ENCODE measurements at regions of chr2 and their contacts with region 1.

Region 1: GRCh38 chr2:38535744-38536506 is 66.8 kb downstream of the HNRNPLL start:
- DNase-seq: peak; percentile 91
- ATAC-seq: peak; percentile 98
- H3K4me3 Mint-ChIP-seq: peak overlapping the region; percentile 48
- H3K27ac Mint-ChIP-seq: no peak overlapping the region
- H3K4me1 Mint-ChIP-seq: peaks cover 2% of the 10 kb centered on the region
- H3K27me3 Mint-ChIP-seq: peaks cover 13% of the 10 kb centered on the region

Region 2: DNA sequence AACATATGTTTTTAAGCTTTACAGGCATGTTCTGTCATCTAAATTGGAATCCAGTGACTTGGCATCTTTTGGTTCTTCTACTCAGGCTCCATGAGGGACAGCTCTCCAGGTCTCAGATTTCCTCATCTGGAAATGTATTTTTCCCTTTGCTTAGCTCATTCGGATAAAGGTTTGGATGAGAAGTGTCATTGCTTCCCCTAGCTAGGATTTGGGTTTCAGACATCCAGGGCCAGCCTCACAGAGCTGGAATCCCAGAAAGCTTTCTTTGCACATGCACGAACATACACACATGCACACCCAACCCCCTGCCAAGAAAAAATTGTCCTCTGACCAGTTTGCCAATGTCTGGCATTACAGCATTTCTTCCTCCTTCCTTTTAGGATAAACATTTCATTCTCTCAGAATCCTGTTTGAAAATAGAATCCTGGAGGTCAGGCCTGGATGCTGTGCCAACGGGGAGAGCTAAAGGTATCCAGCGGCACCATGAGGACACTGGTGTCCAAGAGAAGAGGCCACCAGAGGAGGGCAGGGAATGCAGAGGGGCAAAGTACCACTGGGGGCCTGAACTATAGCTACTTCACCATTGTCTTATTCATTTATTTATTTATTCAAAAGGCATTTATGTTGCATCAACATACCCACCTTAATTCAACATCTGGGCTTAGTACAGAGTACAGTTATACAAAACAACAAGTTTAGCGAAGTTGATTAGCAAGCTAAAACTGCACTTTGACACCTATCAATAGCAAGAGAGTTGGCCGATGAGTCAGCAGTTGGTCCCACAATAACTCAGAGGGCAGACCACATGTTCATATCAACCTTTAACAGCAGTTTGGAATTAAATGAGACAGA is 61.0 kb before region 1 on chr2:
- CTCF ChIA-PET with region 1: no interaction called
- POLR2A ChIA-PET with region 1: no interaction called
- intact Hi-C with region 1: no loop called
- DNase-seq: peak; percentile 67
- ATAC-seq: peak; percentile 80
- H3K4me3 Mint-ChIP-seq: no peak overlapping the region
- H3K27ac Mint-ChIP-seq: no peak overlapping the region
- H3K4me1 Mint-ChIP-seq: peaks cover 28% of the 10 kb centered on the region
- H3K27me3 Mint-ChIP-seq: peaks cover 21% of the 10 kb centered on the region

Region 3: DNA sequence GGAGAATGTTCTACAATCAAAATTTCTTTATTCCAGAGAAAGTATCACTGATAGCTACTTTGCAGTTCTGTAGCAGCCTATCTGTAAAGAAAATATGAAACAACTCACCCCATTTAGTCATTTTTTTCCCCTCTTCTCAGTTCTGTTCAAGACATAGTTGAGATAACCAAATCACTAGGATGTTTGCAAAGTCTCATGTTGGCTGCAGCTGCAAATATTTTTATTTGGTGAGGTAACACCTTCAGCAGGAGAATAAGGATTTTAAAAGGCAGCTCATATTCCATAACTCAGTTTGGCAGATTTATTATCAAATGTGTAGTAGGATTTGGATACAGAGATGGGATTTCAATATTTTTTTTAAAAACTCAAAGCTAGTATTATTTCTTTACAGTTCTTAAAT is 25.8 kb after region 1 on chr2:
- CTCF ChIA-PET with region 1: interaction called, 11 read pairs
- POLR2A ChIA-PET with region 1: no interaction called
- intact Hi-C with region 1: no loop called
- DNase-seq: no peak
- ATAC-seq: no peak
- H3K4me3 Mint-ChIP-seq: no peak overlapping the region
- H3K27ac Mint-ChIP-seq: no peak overlapping the region
- H3K4me1 Mint-ChIP-seq: no peaks in the 10 kb centered on the region
- H3K27me3 Mint-ChIP-seq: no peaks in the 10 kb centered on the region

Region 4: DNA sequence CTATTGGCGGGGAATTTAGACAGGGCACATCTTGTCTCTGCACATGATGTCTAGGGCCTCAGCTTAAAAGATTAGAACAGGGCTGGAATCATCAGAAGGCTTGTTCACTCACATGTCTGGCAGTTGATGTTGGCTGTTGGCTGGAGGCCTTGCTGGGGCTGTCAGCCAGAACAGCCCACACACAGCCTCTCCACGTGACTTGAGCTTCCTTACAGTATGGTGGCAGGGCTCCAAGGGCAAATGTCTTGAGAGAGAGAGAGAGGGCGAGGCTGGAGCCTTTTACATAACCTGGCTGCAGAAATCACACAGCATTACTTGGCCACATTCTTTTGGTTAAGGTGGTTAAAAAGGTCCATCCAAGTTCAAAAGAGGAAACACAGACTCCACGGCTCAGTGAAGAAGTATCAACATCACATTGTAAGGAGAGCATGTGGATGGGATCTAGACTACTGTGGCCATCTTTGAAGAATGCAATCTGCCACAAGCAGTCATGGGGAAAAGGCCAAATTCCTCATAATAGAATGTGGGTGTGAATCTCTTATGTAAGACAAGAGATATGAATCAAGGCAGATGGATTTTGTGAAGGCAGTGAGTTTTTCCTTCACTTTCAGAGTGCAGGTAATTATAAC is 184.8 kb after region 1 on chr2:
- CTCF ChIA-PET with region 1: interaction called, 3 read pairs
- POLR2A ChIA-PET with region 1: no interaction called
- intact Hi-C with region 1: loop called in 1 of 2 experiments (anchors 2 kb)
- DNase-seq: no peak
- ATAC-seq: no peak
- H3K4me3 Mint-ChIP-seq: peak overlapping the region; percentile 27
- H3K27ac Mint-ChIP-seq: peak overlapping the region; percentile 78
- H3K4me1 Mint-ChIP-seq: peaks cover 75% of the 10 kb centered on the region
- H3K27me3 Mint-ChIP-seq: no peaks in the 10 kb centered on the region

Region 5: DNA sequence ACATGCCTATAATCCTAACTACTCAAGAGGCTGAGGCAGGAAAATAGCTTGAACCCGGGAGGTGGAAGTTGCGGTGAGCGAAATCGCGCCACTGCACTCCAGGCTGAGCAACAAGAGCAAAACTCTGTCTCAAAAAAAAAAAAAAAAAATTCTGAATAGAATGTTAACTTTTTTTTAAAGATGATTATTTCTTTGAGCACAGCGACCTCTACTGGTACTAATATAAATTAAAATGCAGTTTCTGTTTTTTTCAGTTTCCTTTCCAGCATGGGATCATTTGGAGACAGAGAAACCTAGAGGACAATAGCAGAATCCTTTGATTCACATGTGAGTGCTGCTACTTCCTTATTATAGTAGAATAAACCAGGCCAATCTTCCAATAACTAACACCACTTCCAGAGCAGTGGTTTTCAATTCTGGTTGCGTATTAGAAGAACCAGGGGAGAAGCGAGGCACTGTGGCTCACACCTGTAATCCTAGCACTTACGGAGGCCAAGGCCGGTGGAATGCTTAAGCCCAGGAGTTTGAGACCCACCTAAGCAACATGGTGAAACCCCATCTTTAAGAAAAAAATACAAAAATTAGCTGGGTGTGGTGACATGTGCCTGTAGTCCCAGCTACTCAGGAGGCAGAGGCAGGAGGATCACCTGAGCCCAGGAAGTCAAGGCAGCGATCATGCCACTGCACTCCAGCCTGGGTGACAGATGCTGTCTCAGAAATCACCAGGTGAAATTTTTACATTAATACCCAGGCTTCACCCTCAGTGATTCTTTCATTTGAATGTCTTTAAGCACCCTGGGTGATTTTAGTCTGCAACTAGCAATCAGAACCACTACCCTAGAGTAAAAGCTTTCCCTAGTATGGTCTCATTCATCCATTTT is 205.2 kb after region 1 on chr2:
- CTCF ChIA-PET with region 1: interaction called, 6 read pairs
- POLR2A ChIA-PET with region 1: no interaction called
- intact Hi-C with region 1: loop called (anchors 1 to 2 kb)
- DNase-seq: peak; percentile 39
- ATAC-seq: peak; percentile 5
- H3K4me3 Mint-ChIP-seq: no peak overlapping the region
- H3K27ac Mint-ChIP-seq: peak overlapping the region; percentile 47
- H3K4me1 Mint-ChIP-seq: peaks cover 55% of the 10 kb centered on the region
- H3K27me3 Mint-ChIP-seq: no peaks in the 10 kb centered on the region

Region 6: GRCh38 chr2:38778687-38779082 is 242.8 kb after region 1 on chr2:
- CTCF ChIA-PET with region 1: no interaction called
- POLR2A ChIA-PET with region 1: no interaction called
- intact Hi-C with region 1: loop called in 1 of 2 experiments (anchors 1 kb)
- DNase-seq: no peak
- ATAC-seq: no peak
- H3K4me3 Mint-ChIP-seq: peak overlapping the region; percentile 97
- H3K27ac Mint-ChIP-seq: peak overlapping the region; percentile 95
- H3K4me1 Mint-ChIP-seq: peaks cover 7% of the 10 kb centered on the region
- H3K27me3 Mint-ChIP-seq: peaks cover 13% of the 10 kb centered on the region

Region 7: DNA sequence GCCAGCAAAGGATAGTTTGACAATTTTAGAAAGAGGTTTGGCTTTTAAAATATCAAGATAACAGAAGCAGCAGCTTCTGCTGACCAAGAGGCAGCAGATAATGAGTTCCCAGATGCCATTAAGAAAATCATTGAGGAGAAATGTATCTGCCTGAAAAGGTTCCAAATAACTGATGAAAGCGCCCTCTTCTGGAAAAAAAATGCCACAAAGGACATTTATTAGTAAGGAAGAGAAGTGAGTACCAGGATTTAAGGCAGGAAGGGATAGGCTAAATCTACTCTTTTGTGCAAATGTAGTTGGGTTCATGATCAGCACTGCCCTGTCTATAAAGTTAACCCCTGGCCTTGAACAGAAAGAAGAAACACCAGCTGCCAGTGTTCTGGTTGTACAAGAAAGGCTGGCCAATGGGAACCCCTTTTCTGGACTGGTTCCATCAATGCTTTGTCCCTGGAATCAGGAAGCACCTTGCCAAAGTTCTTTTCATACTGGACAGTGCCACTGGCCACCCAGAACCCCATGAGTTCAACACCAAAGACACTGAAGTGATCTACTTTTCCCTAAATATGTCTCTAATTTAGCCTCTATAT is 299.2 kb after region 1 on chr2:
- CTCF ChIA-PET with region 1: no interaction called
- POLR2A ChIA-PET with region 1: no interaction called
- intact Hi-C with region 1: loop called (anchors 2 to 5 kb)
- DNase-seq: no peak
- ATAC-seq: no peak
- H3K4me3 Mint-ChIP-seq: no peak overlapping the region
- H3K27ac Mint-ChIP-seq: no peak overlapping the region
- H3K4me1 Mint-ChIP-seq: no peaks in the 10 kb centered on the region
- H3K27me3 Mint-ChIP-seq: no peaks in the 10 kb centered on the region

Region 8: DNA sequence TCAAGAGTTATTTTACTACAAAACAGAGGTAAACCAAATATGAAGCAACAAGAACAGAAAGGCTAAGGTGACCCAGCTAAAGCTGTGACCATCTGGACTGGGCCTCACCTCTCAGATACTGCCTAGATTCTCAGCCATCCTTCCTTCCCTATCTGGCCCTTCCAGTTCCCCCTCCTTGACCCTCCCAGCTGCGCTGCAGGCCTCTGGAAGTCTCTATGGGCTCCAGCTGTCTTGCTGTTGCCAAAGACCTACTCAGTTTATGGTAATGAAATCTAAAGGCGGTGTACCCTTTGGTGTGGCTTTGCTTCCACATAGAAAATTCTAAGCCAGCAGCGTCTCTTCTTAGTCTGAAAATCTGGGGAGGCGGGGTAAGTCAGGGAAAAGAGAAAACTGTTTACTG is 409.4 kb after region 1 on chr2:
- CTCF ChIA-PET with region 1: no interaction called
- POLR2A ChIA-PET with region 1: no interaction called
- intact Hi-C with region 1: no loop called
- DNase-seq: no peak
- ATAC-seq: no peak
- H3K4me3 Mint-ChIP-seq: no peak overlapping the region
- H3K27ac Mint-ChIP-seq: no peak overlapping the region
- H3K4me1 Mint-ChIP-seq: no peaks in the 10 kb centered on the region
- H3K27me3 Mint-ChIP-seq: no peaks in the 10 kb centered on the region